ENCODE measurements at regions of chrX and their contacts with region 1.

Region 1: GRCh38 chrX:15815779-15816437 is 25.6 kb downstream of the ZRSR2 start:
- DNase-seq: no peak
- H3K4me3 ChIP-seq: no peak overlapping the region
- CTCF ChIP-seq: no peak
- POLR2A ChIP-seq: no peak

Region 2: DNA sequence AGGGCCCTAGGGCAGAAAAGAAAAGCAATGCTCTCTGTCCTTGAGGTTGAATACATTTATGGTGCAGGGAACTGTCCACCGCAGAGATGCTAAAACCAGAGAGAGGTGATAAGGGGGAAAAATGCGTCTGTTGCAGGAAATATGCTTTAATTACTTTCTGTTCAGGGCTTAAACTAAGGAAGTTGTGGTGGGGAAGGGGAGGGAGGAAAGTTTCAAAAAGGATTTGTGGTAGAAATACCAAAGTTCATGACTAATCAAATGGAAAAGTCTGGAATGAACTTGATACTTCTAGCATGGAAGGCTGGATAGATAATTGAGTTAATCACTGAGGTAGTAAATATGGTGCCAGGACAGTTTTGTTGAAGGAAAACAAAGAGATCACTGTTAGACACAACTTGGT is 645.0 kb before region 1 on chrX:
- intact Hi-C with region 1: loop called (anchors 10 kb)
- DNase-seq: no peak
- H3K4me3 ChIP-seq: no peak overlapping the region
- CTCF ChIP-seq: no peak
- POLR2A ChIP-seq: no peak

Region 3: DNA sequence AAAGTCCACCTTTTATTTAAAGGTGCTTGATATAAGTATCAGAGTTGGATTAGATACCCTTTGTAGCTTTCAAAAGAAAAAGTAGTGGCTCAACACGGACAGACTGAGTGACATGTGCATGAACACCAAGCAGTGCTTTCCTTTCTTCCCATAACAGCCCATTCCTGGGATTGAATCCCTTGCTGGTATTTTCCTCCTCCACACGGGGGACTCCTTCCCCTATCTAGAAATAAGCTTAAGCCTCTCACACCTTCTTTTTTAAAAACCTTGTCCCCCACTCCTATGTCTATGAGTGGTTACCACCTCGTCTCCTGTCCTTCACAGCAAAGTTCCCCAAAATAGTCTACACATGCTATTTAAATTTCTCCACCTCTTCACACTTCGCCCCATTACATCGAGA is 33.6 kb after region 1 on chrX:
- intact Hi-C with region 1: no loop called
- DNase-seq: no peak
- H3K4me3 ChIP-seq: no peak overlapping the region
- CTCF ChIP-seq: no peak
- POLR2A ChIP-seq: no peak

Region 4: GRCh38 chrX:15870310-15870709 is 54.4 kb after region 1 on chrX:
- intact Hi-C with region 1: loop called (anchors 2 kb)
- DNase-seq: no peak
- H3K4me3 ChIP-seq: no peak overlapping the region
- CTCF ChIP-seq: no peak
- POLR2A ChIP-seq: no peak